ENCODE measurements at regions of chr18 and their contacts with region 1.

Region 1: DNA sequence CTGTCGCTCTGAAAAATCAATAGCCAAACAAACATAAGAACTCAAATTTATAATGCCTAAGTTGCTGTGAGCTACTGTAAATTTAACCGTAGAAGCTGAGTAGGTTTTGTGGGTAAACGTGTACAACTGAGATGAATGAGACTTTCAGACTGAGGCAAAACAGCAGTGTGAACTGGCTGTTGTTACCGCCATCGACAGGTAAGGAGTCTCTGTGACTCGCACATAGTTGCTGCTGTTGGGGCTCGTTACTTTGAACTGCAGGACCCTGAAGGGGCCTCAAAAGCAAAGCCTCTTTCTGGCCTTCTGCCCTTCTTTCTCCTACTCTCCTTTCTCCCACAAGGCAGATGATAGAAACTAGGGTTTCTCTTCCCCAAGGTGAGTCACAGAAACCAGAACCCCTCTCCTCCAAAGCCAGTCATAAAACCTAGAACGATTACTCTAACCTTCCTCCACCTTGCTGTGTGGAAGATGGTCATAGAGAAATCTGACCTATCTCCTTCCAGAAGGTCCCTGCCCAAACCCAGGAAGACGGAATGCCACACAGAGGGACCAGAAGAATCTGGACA is 101.2 kb downstream of the DLGAP1 start:
- DNase-seq: no peak
- ATAC-seq: no peak
- H3K4me3 ChIP-seq: no peak overlapping the region
- H3K4me3 Mint-ChIP-seq: no peak overlapping the region
- H3K27ac ChIP-seq: no peak overlapping the region
- H3K27ac Mint-ChIP-seq: no peak overlapping the region
- H3K4me1 ChIP-seq: no peaks in the 10 kb centered on the region
- H3K4me1 Mint-ChIP-seq: no peaks in the 10 kb centered on the region
- H3K27me3 ChIP-seq: no peaks in the 10 kb centered on the region
- H3K27me3 Mint-ChIP-seq: no peaks in the 10 kb centered on the region
- CTCF ChIP-seq: no peak

Region 2: DNA sequence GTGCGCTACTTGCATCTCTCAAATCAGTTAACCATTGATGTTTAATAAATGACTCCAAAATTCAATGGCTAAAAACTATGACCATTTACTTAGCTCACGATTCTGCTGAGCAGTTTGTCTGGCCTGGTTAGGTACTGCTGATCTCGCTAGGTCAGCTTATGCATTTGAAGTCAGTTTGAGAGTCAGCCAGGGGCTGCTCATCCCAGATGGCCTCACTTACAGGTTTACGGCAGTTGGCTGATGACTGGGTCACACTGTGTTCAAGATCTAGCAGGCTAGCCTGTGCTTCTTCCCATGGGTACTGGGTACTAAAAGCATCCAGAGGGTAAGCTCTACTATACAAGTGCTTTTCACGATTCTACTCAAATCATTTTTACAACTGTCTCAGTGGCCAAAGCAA is 20.9 kb before region 1 on chr18:
- CTCF ChIA-PET with region 1: no interaction called
- POLR2A ChIA-PET with region 1: no interaction called
- intact Hi-C with region 1: loop called in 1 of 2 experiments (anchors 2 kb)
- DNase-seq: no peak
- ATAC-seq: no peak
- H3K4me3 ChIP-seq: no peak overlapping the region
- H3K4me3 Mint-ChIP-seq: no peak overlapping the region
- H3K27ac ChIP-seq: no peak overlapping the region
- H3K27ac Mint-ChIP-seq: no peak overlapping the region
- H3K4me1 ChIP-seq: no peaks in the 10 kb centered on the region
- H3K4me1 Mint-ChIP-seq: no peaks in the 10 kb centered on the region
- H3K27me3 ChIP-seq: no peaks in the 10 kb centered on the region
- H3K27me3 Mint-ChIP-seq: no peaks in the 10 kb centered on the region
- CTCF ChIP-seq: no peak